PC-9 (cell line): ENCODE measurements at regions of chr3 and their contacts with region 1.

Region 1: DNA sequence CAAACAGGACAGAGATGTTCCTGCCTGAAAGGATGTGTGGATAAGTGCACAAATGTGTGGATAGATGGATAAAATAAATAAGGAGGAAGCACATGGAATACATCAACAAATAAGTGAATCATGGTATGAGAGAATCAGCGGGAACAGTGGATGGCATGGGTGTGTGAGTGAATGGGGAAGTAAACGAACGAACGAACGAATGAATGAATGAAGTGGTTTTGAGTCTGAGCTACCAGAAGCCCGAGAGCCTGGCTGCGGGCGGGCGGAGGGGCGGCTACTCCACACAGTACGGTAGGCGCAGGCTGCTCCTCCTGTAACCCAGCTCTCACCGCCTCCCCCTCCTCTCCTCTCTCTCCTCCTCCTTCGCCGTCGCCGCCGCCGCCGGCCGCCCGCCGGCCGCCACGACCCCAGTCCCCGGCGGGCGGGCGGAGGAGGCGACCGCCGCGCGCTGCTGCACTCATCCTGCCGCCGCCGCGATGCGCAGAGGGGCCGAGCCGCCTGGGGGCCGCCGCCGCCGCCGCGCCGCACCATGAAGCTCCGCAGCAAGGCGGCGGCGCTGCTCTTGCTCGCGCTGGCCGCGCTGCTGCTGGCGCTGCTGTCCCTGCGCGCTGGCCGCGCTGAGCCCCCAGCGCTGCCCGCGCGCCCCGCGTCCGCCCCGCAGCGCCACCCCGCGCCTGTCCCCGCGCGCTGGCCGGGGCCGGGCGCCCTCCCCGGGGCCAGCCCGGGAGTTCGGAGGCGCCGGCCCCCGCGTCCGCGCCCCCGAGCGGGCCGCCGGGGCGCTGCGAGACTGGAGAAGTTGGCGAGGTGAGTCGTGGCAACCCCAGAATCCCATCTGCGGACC is at the start of gene GXYLT2:
- DNase-seq: peak in 1 of 2 experiments; percentile 44
- H3K4me3 ChIP-seq: peak within 1 kb of the TSS; percentile 68
- H3K27ac ChIP-seq: no peak within 1 kb of the TSS
- H3K4me1 ChIP-seq: peaks cover 37% of the 10 kb centered on the region
- H3K27me3 ChIP-seq: no peaks in the 10 kb centered on the region
- CTCF ChIP-seq: no peak
- total RNA-seq, gene GXYLT2: 1.7 and 2.9 TPM in 2 replicates

Region 2: GRCh38 chr3:72847751-72848702 is 39.9 kb before region 1 on chr3 and contains the start of gene SHQ1:
- CTCF ChIA-PET with region 1: no interaction called
- POLR2A ChIA-PET with region 1: no interaction called
- intact Hi-C with region 1: loop called (anchors 5 kb)
- DNase-seq: peak; percentile 80 to 93
- H3K4me3 ChIP-seq: peak within 1 kb of the TSS; percentile 81
- H3K27ac ChIP-seq: no peak within 1 kb of the TSS
- H3K4me1 ChIP-seq: peaks cover 20% of the 10 kb centered on the region; the same call in 1 of the 2 replicates
- H3K27me3 ChIP-seq: no peaks in the 10 kb centered on the region
- CTCF ChIP-seq: no peak
- total RNA-seq, gene SHQ1: 24.4 and 24.8 TPM in 2 replicates

Region 3: GRCh38 chr3:72924055-72924454 is 36.1 kb after region 1 on chr3:
- CTCF ChIA-PET with region 1: interaction called, 17 read pairs
- POLR2A ChIA-PET with region 1: no interaction called
- intact Hi-C with region 1: no loop called
- DNase-seq: no peak
- H3K4me3 ChIP-seq: no peak overlapping the region
- H3K27ac ChIP-seq: no peak overlapping the region
- H3K4me1 ChIP-seq: no peaks in the 10 kb centered on the region
- H3K27me3 ChIP-seq: no peaks in the 10 kb centered on the region
- CTCF ChIP-seq: no peak; the same call in 1 of the 2 replicates